Caco-2 (cell line): ENCODE measurements at regions of chr2 and their contacts with region 1.

Region 1: GRCh38 chr2:68467077-68467960 is at the starts of genes APLF and FBXO48:
- DNase-seq: peak; percentile 98 to 99
- H3K4me3 ChIP-seq: peak within 1 kb of the TSS; percentile 95
- H3K4me3 Mint-ChIP-seq: peak within 1 kb of the TSS; percentile 95
- H3K27ac Mint-ChIP-seq: peak within 1 kb of the TSS; percentile 95
- H3K4me1 ChIP-seq: peaks cover 36% of the 10 kb centered on the region
- H3K4me1 Mint-ChIP-seq: peaks cover 27% of the 10 kb centered on the region
- H3K27me3 ChIP-seq: no peaks in the 10 kb centered on the region
- H3K27me3 Mint-ChIP-seq: no peaks in the 10 kb centered on the region
- CTCF ChIP-seq: no peak
- total RNA-seq, gene APLF: 3.9 and 4.0 TPM in 2 replicates
- total RNA-seq, gene FBXO48: 1.1 and 1.2 TPM in 2 replicates

Region 2: GRCh38 chr2:68345129-68345875 is 122.0 kb before region 1 on chr2:
- CTCF ChIA-PET with region 1: no interaction called
- POLR2A ChIA-PET with region 1: no interaction called
- intact Hi-C with region 1: no loop called
- DNase-seq: no peak
- H3K4me3 ChIP-seq: no peak overlapping the region
- H3K4me3 Mint-ChIP-seq: no peak overlapping the region
- H3K27ac Mint-ChIP-seq: no peak overlapping the region
- H3K4me1 ChIP-seq: no peaks in the 10 kb centered on the region
- H3K4me1 Mint-ChIP-seq: no peaks in the 10 kb centered on the region
- H3K27me3 ChIP-seq: no peaks in the 10 kb centered on the region
- H3K27me3 Mint-ChIP-seq: peaks cover 24% of the 10 kb centered on the region
- CTCF ChIP-seq: no peak

Region 3: GRCh38 chr2:68594674-68595492 is 127.6 kb after region 1 on chr2:
- CTCF ChIA-PET with region 1: interaction called, 14 read pairs
- POLR2A ChIA-PET with region 1: no interaction called
- intact Hi-C with region 1: loop called (anchors 1 kb)
- DNase-seq: peak; percentile 37 to 61
- H3K4me3 ChIP-seq: no peak overlapping the region
- H3K4me3 Mint-ChIP-seq: peak overlapping the region; percentile 6
- H3K27ac Mint-ChIP-seq: no peak overlapping the region
- H3K4me1 ChIP-seq: peaks cover 9% of the 10 kb centered on the region
- H3K4me1 Mint-ChIP-seq: peaks cover 7% of the 10 kb centered on the region
- H3K27me3 ChIP-seq: no peaks in the 10 kb centered on the region
- H3K27me3 Mint-ChIP-seq: no peaks in the 10 kb centered on the region
- CTCF ChIP-seq: peak; percentile 71 to 72

Region 4: GRCh38 chr2:68709421-68709911 is 242.1 kb after region 1 on chr2:
- CTCF ChIA-PET with region 1: interaction called, 18 read pairs
- POLR2A ChIA-PET with region 1: no interaction called
- intact Hi-C with region 1: no loop called
- DNase-seq: peak in 1 of 2 experiments; percentile 41
- H3K4me3 ChIP-seq: no peak overlapping the region
- H3K4me3 Mint-ChIP-seq: no peak overlapping the region
- H3K27ac Mint-ChIP-seq: no peak overlapping the region
- H3K4me1 ChIP-seq: no peaks in the 10 kb centered on the region; the same call in 1 of the 2 replicates
- H3K4me1 Mint-ChIP-seq: no peaks in the 10 kb centered on the region
- H3K27me3 ChIP-seq: no peaks in the 10 kb centered on the region; the same call in 1 of the 2 replicates
- H3K27me3 Mint-ChIP-seq: peaks cover 25% of the 10 kb centered on the region
- CTCF ChIP-seq: peak; percentile 70 to 78

Region 5: DNA sequence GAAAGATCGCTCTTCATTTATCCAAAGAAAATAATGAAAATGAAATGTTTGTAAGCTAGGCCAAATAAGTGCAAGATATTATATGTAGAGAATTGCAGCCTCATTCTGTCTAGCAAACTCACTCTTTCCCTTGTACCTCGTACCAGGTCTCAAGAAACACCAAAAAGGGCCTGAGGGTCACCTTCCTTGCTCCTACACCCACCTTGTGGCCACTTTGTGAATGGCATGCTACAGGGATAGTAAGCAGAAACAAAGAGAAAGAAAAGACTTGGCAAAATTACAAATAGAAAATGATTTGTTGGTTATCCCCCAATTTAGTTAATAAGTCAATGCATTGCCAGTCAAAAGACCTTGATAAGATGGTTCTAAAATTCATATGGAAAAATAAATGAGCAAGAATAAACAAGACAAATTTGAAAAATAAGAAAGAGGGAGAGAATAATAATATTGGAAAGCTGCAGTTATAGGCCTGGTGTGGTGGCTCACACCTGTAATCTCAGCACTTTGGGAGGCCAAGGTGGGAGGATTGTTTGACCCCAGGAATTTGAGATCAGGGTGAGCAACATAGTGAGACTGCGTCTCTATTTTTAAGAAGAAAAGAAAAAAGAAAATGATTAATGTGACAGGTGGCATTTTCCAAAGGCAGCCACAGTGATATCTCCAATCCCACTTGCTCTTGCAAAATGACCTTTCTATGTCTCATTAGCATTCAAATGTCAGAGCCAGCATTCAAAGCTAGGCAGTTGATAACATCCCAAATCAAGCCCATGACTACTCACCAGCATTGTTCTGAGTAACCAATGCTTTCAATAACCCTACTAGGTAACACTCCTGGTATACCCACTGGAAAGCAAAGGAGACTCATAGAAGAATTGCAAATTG is 442.7 kb after region 1 on chr2:
- CTCF ChIA-PET with region 1: no interaction called
- POLR2A ChIA-PET with region 1: no interaction called
- intact Hi-C with region 1: loop called (anchors 5 kb)
- DNase-seq: peak; percentile 68 to 76
- H3K4me3 ChIP-seq: no peak overlapping the region
- H3K4me3 Mint-ChIP-seq: no peak overlapping the region
- H3K27ac Mint-ChIP-seq: no peak overlapping the region
- H3K4me1 ChIP-seq: no peaks in the 10 kb centered on the region
- H3K4me1 Mint-ChIP-seq: no peaks in the 10 kb centered on the region
- H3K27me3 ChIP-seq: no peaks in the 10 kb centered on the region
- H3K27me3 Mint-ChIP-seq: no peaks in the 10 kb centered on the region
- CTCF ChIP-seq: peak; percentile 85 to 96